ENCODE measurements at regions of chr1 and their contacts with region 1.

Region 1: GRCh38 chr1:174999216-174999925 is 376 bp upstream of the CACYBP start:
- DNase-seq: peak; percentile 99 to 100 (median 100)
- H3K4me3 ChIP-seq: peak overlapping the region; percentile 87 to 98 (median 94)
- H3K27ac ChIP-seq: peak overlapping the region; percentile 100
- H3K4me1 ChIP-seq: peaks cover 17 to 44% (median 23%) of the 10 kb centered on the region in 4 experiments
- H3K27me3 ChIP-seq: no peaks in the 10 kb centered on the region

Region 2: DNA sequence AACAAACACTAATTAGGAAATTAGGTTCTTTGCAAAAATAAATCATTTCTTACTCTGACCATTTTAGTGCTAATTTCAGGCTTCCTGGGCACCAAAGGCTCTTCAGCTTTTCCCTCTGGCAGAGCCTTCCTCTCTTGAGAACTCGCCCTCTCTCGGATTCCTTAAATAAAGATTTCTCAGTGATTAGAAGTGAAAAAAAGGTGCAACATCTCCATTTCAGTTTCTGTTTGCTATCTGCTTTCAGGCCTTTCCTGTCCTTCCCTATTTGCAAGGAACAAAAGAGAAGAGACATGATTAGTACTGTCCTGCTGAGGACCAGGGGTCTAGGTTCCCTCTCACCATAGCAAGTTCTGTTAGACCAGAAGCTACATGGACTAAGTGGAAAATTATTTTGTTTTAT is 27.5 kb before region 1 on chr1:
- CTCF ChIA-PET with region 1: no interaction called
- POLR2A ChIA-PET with region 1: no interaction called
- DNase-seq: peak in 1 of 3 donors; percentile 27
- H3K4me3 ChIP-seq: no peak overlapping the region
- H3K27ac ChIP-seq: no peak overlapping the region
- H3K4me1 ChIP-seq: peaks cover 29 to 45% (median 42%) of the 10 kb centered on the region in 4 experiments
- H3K27me3 ChIP-seq: no peaks in the 10 kb centered on the region

Region 3: DNA sequence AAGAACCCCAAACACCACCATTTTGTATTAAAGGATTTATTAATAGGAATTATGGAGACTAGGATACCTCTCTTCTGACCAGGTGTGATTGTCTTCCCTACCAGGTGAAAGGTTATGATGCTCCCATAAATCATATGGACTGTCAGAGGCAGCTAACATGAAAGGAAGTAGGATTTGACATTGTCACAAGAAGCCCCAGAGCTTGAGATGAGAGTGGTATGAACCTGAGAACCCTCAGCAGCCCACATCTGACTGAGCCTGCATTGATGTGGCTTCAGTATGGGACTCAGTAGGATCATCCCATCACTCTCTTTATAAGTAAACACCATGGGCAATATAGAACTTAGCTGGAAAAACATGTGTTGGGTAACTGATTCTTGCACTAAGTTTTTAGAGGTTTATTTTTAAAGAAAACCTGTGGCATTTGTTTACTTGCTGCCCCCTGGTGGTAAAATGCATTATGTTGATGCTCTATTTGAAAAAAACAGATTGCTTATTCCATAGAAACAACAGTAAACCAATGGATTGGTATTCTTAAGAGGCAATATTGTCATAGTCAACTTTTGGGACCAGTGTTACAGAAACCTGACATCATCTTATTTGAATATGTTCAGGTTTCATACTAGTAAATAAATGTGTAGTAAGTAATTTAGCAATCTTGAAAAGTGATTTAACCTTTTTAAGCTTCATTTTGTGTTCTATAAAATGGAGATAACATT is 16.2 kb before region 1 on chr1:
- CTCF ChIA-PET with region 1: interaction called, 52 read pairs
- POLR2A ChIA-PET with region 1: interaction called, 3 read pairs
- DNase-seq: peak; percentile 71 to 83 (median 77)
- H3K4me3 ChIP-seq: no peak overlapping the region
- H3K27ac ChIP-seq: no peak overlapping the region
- H3K4me1 ChIP-seq: peaks cover 0 to 4% (median 0%) of the 10 kb centered on the region in 4 experiments
- H3K27me3 ChIP-seq: no peaks in the 10 kb centered on the region

Region 4: GRCh38 chr1:175023043-175023921 is 23.9 kb after region 1 on chr1 and contains the start of gene MRPS14:
- CTCF ChIA-PET with region 1: interaction called, 8 read pairs
- POLR2A ChIA-PET with region 1: interaction called, 10 read pairs
- DNase-seq: peak; percentile 99 to 100 (median 100)
- H3K4me3 ChIP-seq: peak within 1 kb of the TSS; percentile 95 to 100 (median 100)
- H3K27ac ChIP-seq: peak within 1 kb of the TSS; percentile 94 to 97
- H3K4me1 ChIP-seq: peaks cover 5 to 13% (median 10%) of the 10 kb centered on the region in 4 experiments
- H3K27me3 ChIP-seq: no peaks in the 10 kb centered on the region

Measured in common myeloid progenitor, CD34-positive (primary cell).